BJ (cell line): ENCODE measurements at regions of chr11 and their contacts with region 1.

Region 1: GRCh38 chr11:4072668-4073285 is 21.8 kb upstream of the RRM1 start:
- DNase-seq: no peak
- H3K4me3 ChIP-seq: no peak overlapping the region
- H3K27me3 ChIP-seq: no peaks in the 10 kb centered on the region
- CTCF ChIP-seq: peak; percentile 75

Region 2: DNA sequence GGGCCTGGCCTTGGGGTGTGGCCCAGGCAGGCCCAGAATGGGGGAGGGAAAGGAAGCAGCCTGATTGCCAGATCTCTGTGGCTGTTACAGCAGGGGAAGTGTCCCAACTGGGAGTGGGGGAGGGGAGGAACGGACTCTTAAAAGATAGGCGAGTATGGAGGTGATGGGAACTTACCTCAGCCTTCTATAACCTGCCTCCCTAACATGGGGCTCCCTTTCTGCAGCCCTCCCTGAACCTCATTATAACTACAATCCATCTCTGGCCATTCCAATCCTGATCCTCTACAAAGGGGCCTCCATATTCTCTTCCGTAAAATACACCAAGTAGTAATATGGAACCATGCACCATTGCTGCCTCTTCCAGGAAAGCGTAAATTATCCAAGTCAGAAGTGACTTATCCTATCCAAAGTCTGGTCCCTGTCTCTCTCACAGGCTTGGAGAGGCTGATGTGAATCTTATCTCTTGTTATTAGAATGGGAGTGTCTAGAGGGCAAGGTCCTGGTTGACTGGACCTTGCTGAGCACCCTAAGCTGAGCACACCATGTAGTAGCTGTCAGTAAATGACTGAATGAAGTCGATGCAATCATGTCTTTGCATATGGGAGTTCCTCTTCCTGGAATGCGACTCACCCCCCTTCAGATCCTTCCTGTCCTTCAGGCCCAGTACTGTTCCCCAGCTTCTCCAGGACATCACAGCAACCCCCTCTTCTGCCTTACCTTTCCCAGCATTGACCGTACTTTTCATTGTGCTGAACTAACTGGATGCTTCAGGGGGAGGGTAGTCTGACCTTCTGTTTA is 237.9 kb before region 1 on chr11:
- CTCF ChIA-PET with region 1: interaction called, 50 read pairs
- POLR2A ChIA-PET with region 1: no interaction called
- DNase-seq: no peak
- H3K4me3 ChIP-seq: no peak overlapping the region
- H3K27me3 ChIP-seq: no peaks in the 10 kb centered on the region
- CTCF ChIP-seq: no peak

Region 3: GRCh38 chr11:3841426-3842350 is 231.1 kb before region 1 on chr11:
- CTCF ChIA-PET with region 1: interaction called, 524 read pairs
- POLR2A ChIA-PET with region 1: no interaction called
- DNase-seq: peak; percentile 34
- H3K4me3 ChIP-seq: peak overlapping the region; percentile 80
- H3K27me3 ChIP-seq: no peaks in the 10 kb centered on the region
- CTCF ChIP-seq: peak; percentile 94

Region 4: DNA sequence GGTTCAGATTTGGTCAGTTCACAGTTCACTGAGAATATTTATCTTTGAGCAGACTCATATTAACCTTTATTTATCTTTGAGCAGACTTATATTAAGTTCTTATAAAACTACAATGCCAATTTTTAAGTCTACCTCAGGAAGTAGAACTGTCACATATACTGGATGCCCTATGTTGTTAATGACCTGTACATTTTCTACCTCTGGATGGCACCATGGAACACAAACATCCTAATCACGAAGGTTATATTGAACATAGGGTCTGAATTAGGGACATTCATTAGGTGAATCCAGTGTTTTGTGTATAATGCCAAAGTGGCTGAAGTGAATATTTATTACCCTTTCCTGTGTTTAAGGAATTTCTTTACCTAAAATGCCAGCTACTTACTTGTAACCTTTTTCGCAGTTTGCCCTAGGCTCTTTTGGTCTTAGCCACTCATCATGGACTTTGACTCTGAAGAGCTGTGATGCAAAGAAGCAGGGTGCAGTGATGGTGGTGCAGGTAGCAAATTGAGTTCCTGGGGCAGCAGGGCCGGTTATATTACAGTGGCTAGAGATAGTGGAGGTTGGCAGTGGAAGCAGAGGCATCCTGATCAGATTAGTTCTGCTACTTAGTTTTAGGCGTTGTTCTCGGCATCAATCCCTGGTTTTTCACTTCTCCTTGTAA is 145.5 kb before region 1 on chr11:
- CTCF ChIA-PET with region 1: interaction called, 11 read pairs
- POLR2A ChIA-PET with region 1: no interaction called
- DNase-seq: no peak
- H3K4me3 ChIP-seq: no peak overlapping the region
- H3K27me3 ChIP-seq: no peaks in the 10 kb centered on the region
- CTCF ChIP-seq: no peak

Region 5: GRCh38 chr11:4060182-4060923 is 12.4 kb before region 1 on chr11:
- CTCF ChIA-PET with region 1: interaction called, 30 read pairs
- POLR2A ChIA-PET with region 1: interaction called, 3 read pairs
- DNase-seq: no peak
- H3K4me3 ChIP-seq: no peak overlapping the region
- H3K27me3 ChIP-seq: no peaks in the 10 kb centered on the region
- CTCF ChIP-seq: no peak

Region 6: DNA sequence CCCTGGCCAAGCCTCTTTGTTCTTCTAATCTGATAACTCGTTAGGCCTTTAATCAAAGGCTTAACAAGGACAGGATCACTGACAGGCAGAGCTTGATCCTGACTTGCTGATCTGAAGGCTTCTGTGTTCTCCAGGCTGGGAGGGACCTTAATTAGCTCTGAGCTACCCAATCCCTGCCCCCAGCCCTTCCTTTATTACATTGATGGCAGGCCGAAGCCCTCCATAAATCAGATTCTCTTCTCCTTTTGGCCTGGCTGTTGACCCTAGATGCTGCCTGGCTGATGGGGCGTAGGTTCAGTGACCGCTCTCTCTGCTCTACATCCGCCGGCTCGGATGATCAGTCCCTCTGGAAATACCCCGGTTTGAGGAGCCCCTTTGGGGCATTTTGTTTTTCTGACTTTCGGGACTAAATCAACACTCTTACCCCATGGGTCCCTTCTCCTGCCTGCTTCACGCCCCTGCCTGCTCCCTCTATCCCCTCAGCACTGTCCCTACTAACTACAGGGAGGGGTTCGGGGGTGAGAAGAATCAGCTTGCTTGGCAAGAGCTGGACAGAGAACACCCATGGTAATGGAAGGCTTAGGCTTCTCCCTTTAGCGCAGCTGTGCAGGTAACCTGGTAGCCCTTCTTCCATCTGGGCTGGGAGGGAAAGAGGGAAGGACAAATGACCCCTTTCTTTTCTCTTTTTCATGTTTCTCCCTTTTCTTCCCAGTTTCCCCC is 11.8 kb after region 1 on chr11:
- CTCF ChIA-PET with region 1: interaction called, 31 read pairs
- POLR2A ChIA-PET with region 1: no interaction called
- DNase-seq: no peak
- H3K4me3 ChIP-seq: no peak overlapping the region
- H3K27me3 ChIP-seq: no peaks in the 10 kb centered on the region
- CTCF ChIP-seq: no peak